Posterior cingulate gyrus (tissue), 11 donors: ENCODE measurements at regions of chr7 and their contacts with region 1.

Region 1: GRCh38 chr7:31443457-31443856 is 70.4 kb upstream of the ITPRID1 start:
- DNase-seq: no peak

Region 2: GRCh38 chr7:31192986-31193385 is 250.5 kb before region 1 on chr7:
- intact Hi-C with region 1: loop called (anchors 2 kb)
- DNase-seq: peak; percentile 65 to 97 (median 78)

Region 3: GRCh38 chr7:31261341-31261740 is 182.1 kb before region 1 on chr7:
- intact Hi-C with region 1: no loop called
- DNase-seq: peak in 1 of 10 donors; percentile 81

Region 4: DNA sequence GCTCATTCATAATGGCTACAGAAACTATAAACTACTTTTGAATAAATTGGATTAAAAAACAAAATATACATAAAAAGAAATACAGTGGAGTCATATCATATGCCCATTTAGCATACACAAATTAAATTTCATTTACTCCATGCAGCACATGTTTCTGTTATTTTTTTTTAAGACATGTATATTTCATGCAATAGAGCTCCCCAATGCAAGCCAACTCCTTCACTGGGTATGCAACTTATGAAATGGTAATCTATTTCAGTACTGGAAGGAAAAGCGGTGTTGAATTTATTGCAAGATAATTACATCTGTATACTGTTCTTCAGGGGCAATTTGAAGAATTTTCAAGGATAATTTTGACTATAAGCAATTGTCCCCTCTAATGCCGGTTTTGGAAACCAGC is 152.9 kb before region 1 on chr7:
- intact Hi-C with region 1: no loop called
- DNase-seq: no peak

Region 5: DNA sequence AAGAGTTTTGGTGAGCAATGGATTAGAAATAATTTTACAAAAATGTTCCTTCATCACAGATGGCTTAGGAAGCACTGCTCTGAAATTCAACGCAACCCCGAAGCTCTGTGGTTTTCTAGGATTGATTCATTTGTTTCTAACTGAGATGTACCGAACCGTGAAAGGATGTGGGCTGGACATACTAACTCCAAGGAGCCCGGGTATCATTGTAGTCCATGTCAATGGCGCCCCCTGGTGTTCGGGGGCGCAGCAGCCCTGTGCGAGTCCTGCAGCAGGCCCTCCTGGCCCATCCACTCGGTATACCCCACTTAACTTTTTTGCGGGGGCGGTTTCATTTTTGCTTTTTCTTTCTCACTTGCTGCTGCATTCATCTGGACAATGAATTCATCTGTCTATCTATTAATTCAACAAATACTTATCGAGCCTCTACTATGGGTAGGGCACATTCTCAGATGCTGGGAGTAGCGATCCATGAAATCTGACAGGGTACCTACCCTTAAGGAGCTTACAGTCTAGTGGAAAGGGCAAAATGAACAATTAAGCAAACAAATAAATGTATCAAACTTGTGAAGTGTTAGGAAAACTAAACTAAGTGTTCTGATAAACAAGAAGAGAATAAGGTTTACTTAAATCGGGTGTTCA is 45.2 kb after region 1 on chr7:
- intact Hi-C with region 1: loop called (anchors 5 kb)
- DNase-seq: peak in 7 of 10 donors; percentile 33 to 92 (median 57)

Region 6: DNA sequence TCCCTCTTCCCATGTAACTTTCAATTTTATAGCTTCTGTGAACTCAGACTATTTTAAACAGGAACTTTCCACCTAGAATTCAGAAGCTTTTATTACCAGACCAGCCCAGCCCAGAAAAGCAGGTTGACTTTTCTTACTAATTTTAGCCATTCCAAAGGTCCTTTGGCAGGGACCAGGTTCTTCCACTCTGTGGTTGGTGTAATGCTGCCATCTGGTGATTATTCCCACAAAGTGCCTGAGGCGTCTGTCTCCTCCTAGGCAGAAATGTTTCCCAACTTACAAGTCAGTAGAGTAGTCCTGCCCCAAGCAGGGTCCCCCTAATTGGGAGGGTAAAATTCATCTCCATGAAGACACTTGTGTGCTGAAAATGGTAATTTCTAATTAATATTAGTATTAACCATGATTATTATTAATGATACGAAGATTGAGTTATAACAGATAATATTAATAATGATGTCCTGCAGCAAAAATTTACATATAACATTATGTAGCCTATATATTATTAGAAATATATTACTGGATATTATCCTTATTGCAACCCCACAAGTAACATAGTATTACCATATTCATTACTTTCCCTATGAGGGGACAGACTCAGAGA is 190.5 kb after region 1 on chr7:
- intact Hi-C with region 1: loop called (anchors 1 kb)
- DNase-seq: peak in 6 of 10 donors; percentile 40 to 92 (median 65)

Region 7: DNA sequence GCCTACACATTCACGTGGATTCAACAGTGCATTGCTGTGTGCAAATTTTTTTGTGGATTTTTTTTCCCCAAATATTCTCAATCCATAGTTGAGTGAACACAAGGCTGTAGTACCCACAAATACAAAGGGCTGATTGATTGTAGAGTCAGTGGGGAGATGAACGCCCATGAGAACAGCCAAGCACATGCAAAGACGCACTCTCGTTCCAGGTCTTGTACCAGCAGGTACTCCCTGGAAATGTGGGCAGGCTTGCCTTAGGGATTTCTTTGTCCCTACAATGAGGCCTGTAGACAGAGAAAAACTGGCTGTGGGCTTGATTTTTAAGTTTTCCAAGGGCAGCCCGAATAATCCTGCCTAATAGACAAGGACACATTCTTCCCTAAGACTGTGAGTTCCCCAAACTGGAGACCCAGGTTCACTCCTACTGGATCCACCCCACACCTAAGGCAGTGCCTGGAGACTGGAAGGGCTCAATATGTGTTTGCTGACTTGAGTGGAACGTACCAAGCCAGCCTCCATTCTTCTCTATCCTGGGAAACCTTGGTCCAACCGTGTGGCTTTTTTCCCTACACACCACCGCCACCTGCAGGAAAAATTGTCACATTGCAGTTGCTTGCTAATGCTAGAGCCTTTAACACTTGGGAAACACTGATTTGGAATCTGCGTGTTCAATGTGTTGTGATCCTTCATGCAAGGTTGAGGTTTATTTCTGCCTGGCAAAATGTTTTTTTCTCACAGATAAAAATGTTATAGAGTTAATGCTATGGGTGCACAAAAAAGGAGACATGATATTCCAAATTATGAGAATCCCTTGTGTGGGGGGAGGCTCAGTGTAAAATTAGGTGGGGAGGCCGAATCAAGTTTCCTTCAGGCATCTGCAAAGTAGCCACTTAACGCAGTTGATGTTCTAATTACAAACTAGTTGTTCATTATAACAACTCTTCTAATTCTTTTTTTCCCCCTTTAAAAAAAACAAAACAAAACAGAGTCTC is 292.8 kb after region 1 on chr7:
- intact Hi-C with region 1: loop called (anchors 1 kb)
- DNase-seq: peak; percentile 53 to 95 (median 81)